Activated T-helper 2 cell treated with anti-CD3 and anti-CD28 coated beads, Interferon-gamma antibody, Interleukin-2, Interleukin-4, amounts not matched to agents 10 μg/mL and 5 μg/mL and 100 μg/mL, durations not matched to agents 14 hours and 24 hours and 36 hours (primary cell): ENCODE measurements at regions of chr11 and their contacts with region 1.

Region 1: GRCh38 chr11:65497141-65498041 is 1.5 kb upstream of the MALAT1 start:
- DNase-seq: peak; percentile 97
- H3K4me3 Mint-ChIP-seq: no peak overlapping the region
- H3K27ac Mint-ChIP-seq: peak overlapping the region; percentile 88
- H3K4me1 Mint-ChIP-seq: peaks cover 30% of the 10 kb centered on the region
- H3K27me3 Mint-ChIP-seq: no peaks in the 10 kb centered on the region

Region 2: GRCh38 chr11:65382033-65382807 is 115.2 kb before region 1 on chr11 and contains the start of gene SLC25A45:
- intact Hi-C with region 1: loop called (anchors 1 kb)
- DNase-seq: peak; percentile 90
- H3K4me3 Mint-ChIP-seq: peak within 1 kb of the TSS; percentile 86
- H3K27ac Mint-ChIP-seq: peak within 1 kb of the TSS; percentile 99
- H3K4me1 Mint-ChIP-seq: peaks cover 40% of the 10 kb centered on the region
- H3K27me3 Mint-ChIP-seq: no peaks in the 10 kb centered on the region
- total RNA-seq, gene SLC25A45: 14.6 and 16.3 TPM in 2 replicates

Region 3: DNA sequence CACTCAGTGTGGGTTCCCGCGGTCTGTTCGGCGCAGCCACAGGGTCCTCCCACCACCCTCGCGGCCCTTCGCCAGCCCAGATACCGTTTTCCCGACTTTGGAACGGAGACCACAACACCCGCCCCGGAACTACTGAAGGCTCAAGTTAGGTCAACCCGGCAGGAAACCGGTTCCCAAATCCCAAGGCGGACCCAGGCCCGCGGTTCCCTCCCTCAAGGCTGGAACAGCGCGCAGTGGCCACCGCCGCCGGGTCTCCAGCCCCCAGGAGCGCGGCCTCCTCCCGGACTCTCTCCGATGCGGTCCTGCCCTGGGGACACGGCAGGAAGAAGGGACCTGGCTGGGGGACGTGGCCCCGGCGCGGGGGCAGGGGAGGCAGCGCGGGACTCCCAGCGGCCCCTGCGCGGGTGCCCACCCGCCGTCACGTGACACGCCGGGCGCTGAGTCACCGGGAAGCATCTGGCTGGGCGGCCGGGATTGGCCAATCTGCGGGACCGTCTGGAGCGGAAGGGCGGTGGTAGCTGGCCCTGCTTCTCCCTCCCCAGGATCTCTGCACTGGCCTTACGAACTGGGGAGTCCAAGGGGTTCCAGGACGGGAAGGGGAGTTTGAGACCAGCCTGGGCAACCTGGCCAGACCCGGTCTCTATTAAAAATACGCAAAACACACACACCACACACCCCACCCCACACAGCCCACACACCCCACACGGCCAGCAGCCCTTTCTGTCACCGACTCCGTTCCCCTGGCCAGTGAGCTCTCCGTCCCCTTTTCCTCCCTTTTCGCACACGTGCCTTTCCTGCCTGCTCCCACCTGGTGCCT is 20.0 kb before region 1 on chr11:
- intact Hi-C with region 1: loop called (anchors 1 kb)
- DNase-seq: peak; percentile 87
- H3K4me3 Mint-ChIP-seq: peak overlapping the region; percentile 100
- H3K27ac Mint-ChIP-seq: peak overlapping the region; percentile 100
- H3K4me1 Mint-ChIP-seq: peaks cover 8% of the 10 kb centered on the region
- H3K27me3 Mint-ChIP-seq: no peaks in the 10 kb centered on the region

Region 4: GRCh38 chr11:65927904-65928397 is 430.6 kb after region 1 on chr11:
- intact Hi-C with region 1: no loop called
- DNase-seq: peak; percentile 75
- H3K4me3 Mint-ChIP-seq: peak overlapping the region; percentile 65
- H3K27ac Mint-ChIP-seq: peak overlapping the region; percentile 89
- H3K4me1 Mint-ChIP-seq: peaks cover 31% of the 10 kb centered on the region
- H3K27me3 Mint-ChIP-seq: no peaks in the 10 kb centered on the region